ENCODE measurements at regions of chr13 and their contacts with region 1.

Region 1: DNA sequence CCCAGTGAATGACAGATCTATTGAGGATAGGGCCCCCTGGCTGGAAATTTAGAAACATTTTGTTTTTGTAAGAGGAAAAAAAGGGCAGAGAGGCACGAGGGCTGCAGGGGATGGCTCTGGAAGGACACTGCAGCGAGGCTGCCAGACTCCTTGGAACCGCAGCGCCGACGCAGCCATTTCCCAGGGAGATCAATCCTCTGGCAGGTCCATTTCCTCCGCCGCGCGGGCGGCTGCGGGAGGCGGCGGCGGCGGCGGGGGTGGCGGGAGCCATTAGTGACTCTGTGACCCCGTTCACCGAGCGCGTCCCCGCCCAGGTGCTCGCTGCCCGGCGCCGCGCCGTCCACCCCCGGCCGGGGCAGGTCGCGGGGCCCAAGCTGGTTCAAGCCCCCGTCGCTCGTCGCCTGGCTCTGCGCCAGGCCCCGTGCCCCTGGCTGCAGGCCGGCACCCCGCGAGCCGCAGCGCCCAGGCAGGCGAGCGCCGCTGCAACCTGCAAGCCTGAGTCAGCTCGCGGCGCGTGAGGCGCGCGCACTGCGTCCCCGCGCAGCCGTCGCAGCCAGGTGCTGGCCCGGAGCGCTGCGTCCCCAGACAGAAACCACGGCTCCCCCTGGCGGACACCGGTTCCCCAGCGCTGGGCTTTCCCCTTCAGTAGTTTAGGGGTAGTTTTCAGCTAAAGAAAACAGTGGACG is 192.6 kb downstream of the KATNAL1 start:
- DNase-seq: peak; percentile 85 to 97 (median 95)
- ATAC-seq: peak; percentile 88
- H3K4me3 ChIP-seq: peak overlapping the region; percentile 53
- H3K4me3 Mint-ChIP-seq: peak overlapping the region; percentile 91
- H3K27ac ChIP-seq: no peak overlapping the region
- H3K27ac Mint-ChIP-seq: peak overlapping the region; percentile 78
- H3K4me1 ChIP-seq: peaks cover 29% of the 10 kb centered on the region
- H3K4me1 Mint-ChIP-seq: peaks cover 44% of the 10 kb centered on the region
- H3K27me3 ChIP-seq: no peaks in the 10 kb centered on the region
- H3K27me3 Mint-ChIP-seq: no peaks in the 10 kb centered on the region
- CTCF ChIP-seq: peak; percentile 86

Region 2: DNA sequence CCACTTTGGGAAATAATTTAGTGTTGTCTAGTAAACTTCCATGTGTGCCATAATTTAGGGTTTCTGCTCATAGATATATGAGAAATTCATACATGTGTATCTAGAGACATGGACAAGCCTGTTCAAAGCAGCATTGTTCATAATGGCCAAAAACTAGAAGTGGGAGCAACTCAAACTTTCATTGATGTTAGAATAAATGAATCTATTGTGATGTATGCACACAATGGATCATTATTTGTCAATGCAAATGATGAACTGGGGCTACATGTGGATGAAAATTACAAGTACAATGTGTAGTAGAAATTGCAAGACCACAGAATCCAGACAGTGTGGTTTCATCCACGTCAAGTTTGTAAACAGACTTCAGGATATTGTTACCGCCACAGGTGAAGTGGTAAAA is 803.9 kb before region 1 on chr13:
- CTCF ChIA-PET with region 1: no interaction called
- POLR2A ChIA-PET with region 1: no interaction called
- intact Hi-C with region 1: no loop called
- DNase-seq: no peak
- ATAC-seq: no peak
- H3K4me3 ChIP-seq: no peak overlapping the region
- H3K4me3 Mint-ChIP-seq: no peak overlapping the region
- H3K27ac ChIP-seq: no peak overlapping the region
- H3K27ac Mint-ChIP-seq: no peak overlapping the region
- H3K4me1 ChIP-seq: no peaks in the 10 kb centered on the region
- H3K4me1 Mint-ChIP-seq: no peaks in the 10 kb centered on the region
- H3K27me3 ChIP-seq: no peaks in the 10 kb centered on the region
- H3K27me3 Mint-ChIP-seq: peaks cover 13% of the 10 kb centered on the region
- CTCF ChIP-seq: no peak

Region 3: GRCh38 chr13:29508130-29508875 is 606.4 kb before region 1 on chr13:
- CTCF ChIA-PET with region 1: interaction called, 35 read pairs
- POLR2A ChIA-PET with region 1: no interaction called
- intact Hi-C with region 1: loop called (anchors 1 kb)
- DNase-seq: peak; percentile 49 to 83 (median 68)
- ATAC-seq: peak; percentile 75
- H3K4me3 ChIP-seq: no peak overlapping the region
- H3K4me3 Mint-ChIP-seq: no peak overlapping the region
- H3K27ac ChIP-seq: no peak overlapping the region
- H3K27ac Mint-ChIP-seq: no peak overlapping the region
- H3K4me1 ChIP-seq: no peaks in the 10 kb centered on the region
- H3K4me1 Mint-ChIP-seq: no peaks in the 10 kb centered on the region
- H3K27me3 ChIP-seq: no peaks in the 10 kb centered on the region
- H3K27me3 Mint-ChIP-seq: peaks cover 11% of the 10 kb centered on the region
- CTCF ChIP-seq: peak; percentile 88

Region 4: DNA sequence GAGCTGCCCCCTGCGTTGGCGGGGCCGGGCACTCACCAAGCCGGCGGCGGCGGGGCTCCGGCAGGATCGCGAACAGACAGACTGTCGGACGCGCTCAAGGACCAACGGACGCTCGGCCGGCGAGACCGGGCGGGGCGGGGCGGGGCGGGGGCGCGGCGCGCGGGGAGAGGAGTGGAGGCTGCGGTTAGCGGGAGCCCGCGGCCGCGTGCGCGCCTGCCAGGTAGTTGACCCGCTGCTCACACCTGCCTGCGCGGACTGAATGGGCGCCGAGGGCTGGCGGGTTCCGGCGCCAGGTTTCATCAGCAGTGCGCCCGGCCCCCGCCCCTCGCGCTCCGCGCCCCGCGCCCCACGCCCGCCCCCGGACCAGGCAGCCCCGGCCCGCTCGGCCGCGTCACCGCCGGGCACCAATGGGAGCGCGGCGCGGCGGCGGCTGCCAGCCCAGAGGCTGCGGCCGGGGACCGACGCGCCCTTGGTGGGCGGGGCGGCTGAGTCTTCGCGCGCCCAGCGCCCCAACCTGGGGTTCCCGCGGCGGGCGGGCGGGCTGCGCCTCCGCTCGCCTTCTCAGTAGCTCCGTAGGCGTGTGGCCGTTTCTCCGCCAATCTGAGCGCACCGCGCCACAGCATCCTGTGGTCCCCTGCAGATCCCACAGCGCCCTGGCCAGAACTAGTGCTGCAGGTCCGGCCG is 519.2 kb before region 1 on chr13 and contains the start of gene SLC7A1:
- CTCF ChIA-PET with region 1: interaction called, 5 read pairs
- POLR2A ChIA-PET with region 1: no interaction called
- intact Hi-C with region 1: loop called in 1 of 2 experiments (anchors 5 kb)
- DNase-seq: peak; percentile 54 to 95 (median 74)
- ATAC-seq: peak; percentile 90
- H3K4me3 ChIP-seq: peak within 1 kb of the TSS; percentile 65
- H3K4me3 Mint-ChIP-seq: peak within 1 kb of the TSS; percentile 97
- H3K27ac ChIP-seq: peak within 1 kb of the TSS; percentile 31 to 52
- H3K27ac Mint-ChIP-seq: peak within 1 kb of the TSS; percentile 93
- H3K4me1 ChIP-seq: peaks cover 23% of the 10 kb centered on the region
- H3K4me1 Mint-ChIP-seq: peaks cover 45% of the 10 kb centered on the region
- H3K27me3 ChIP-seq: no peaks in the 10 kb centered on the region
- H3K27me3 Mint-ChIP-seq: no peaks in the 10 kb centered on the region
- CTCF ChIP-seq: no peak
- total RNA-seq, gene SLC7A1: 11.3 to 12.3 TPM

Region 5: GRCh38 chr13:29771247-29771646 is 343.5 kb before region 1 on chr13:
- CTCF ChIA-PET with region 1: interaction called, 100 read pairs
- POLR2A ChIA-PET with region 1: interaction called, 31 read pairs
- intact Hi-C with region 1: loop called (anchors 1 kb)
- DNase-seq: peak in 3 of 14 experiments; percentile 64 to 69 (median 67)
- ATAC-seq: peak; percentile 75
- H3K4me3 ChIP-seq: no peak overlapping the region
- H3K4me3 Mint-ChIP-seq: no peak overlapping the region
- H3K27ac ChIP-seq: no peak overlapping the region
- H3K27ac Mint-ChIP-seq: no peak overlapping the region
- H3K4me1 ChIP-seq: no peaks in the 10 kb centered on the region
- H3K4me1 Mint-ChIP-seq: peaks cover 8% of the 10 kb centered on the region
- H3K27me3 ChIP-seq: no peaks in the 10 kb centered on the region
- H3K27me3 Mint-ChIP-seq: no peaks in the 10 kb centered on the region
- CTCF ChIP-seq: peak; percentile 78

Region 6: GRCh38 chr13:29923554-29924481 is 190.9 kb before region 1 on chr13:
- CTCF ChIA-PET with region 1: interaction called, 10 read pairs
- POLR2A ChIA-PET with region 1: no interaction called
- intact Hi-C with region 1: no loop called
- DNase-seq: peak in 13 of 14 experiments; percentile 19 to 78 (median 42)
- ATAC-seq: peak; percentile 75
- H3K4me3 ChIP-seq: no peak overlapping the region
- H3K4me3 Mint-ChIP-seq: no peak overlapping the region
- H3K27ac ChIP-seq: no peak overlapping the region
- H3K27ac Mint-ChIP-seq: no peak overlapping the region
- H3K4me1 ChIP-seq: peaks cover 22% of the 10 kb centered on the region
- H3K4me1 Mint-ChIP-seq: peaks cover 52% of the 10 kb centered on the region
- H3K27me3 ChIP-seq: no peaks in the 10 kb centered on the region
- H3K27me3 Mint-ChIP-seq: no peaks in the 10 kb centered on the region
- CTCF ChIP-seq: peak; percentile 70

Region 7: DNA sequence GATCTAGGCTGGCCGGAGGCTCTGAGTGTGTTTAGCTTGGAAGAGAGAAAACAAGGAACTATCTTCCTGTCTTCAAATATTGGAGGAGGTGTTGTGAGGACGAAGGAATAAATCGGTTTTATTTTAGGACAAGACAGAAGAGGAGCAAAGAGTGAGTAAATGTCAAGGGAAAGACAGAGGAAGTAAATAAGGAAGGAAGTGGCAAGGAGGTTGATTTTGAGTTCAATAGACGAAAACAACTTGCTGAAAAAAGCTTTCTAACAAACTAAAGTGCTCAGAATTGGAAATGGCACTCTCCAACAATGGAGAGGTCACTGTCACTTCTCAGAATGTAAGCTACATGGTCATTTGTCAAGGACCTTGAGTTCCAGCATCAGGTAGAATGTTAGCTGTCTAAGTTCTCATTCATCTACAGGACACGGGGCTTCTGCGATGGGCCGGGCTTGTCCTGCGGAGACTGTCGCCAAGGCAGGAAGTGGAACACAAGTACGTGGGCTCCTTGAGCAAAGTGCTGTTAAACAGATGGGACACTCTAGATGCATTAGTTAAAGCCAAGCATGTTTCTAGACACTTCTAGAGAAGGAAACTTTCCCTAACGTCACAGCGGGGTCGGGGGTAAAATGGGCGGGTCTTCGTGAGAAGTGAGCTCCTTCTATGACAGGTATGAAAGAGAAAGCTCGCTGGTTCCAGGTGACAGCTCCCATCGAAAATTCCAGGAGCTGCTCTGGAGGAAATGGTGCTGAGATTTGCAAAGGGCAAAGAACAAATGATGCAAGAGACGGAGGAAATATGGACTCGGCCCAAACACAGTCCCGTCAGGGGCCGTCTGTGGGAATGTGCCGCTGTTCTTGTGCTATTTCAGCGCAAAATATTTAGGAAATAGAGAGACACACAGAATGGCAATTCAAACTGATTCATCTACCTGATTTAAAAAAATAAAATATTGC is 160.4 kb before region 1 on chr13:
- CTCF ChIA-PET with region 1: interaction called, 7 read pairs
- POLR2A ChIA-PET with region 1: interaction called, 6 read pairs
- intact Hi-C with region 1: loop called in 1 of 2 experiments (anchors 5 kb)
- DNase-seq: peak in 13 of 14 experiments; percentile 16 to 72 (median 44)
- ATAC-seq: peak; percentile 76
- H3K4me3 ChIP-seq: peak overlapping the region; percentile 51
- H3K4me3 Mint-ChIP-seq: peak overlapping the region; percentile 90
- H3K27ac ChIP-seq: peak overlapping the region in 1 of 2 donors; percentile 61
- H3K27ac Mint-ChIP-seq: peak overlapping the region; percentile 88
- H3K4me1 ChIP-seq: peaks cover 34% of the 10 kb centered on the region
- H3K4me1 Mint-ChIP-seq: peaks cover 65% of the 10 kb centered on the region
- H3K27me3 ChIP-seq: no peaks in the 10 kb centered on the region
- H3K27me3 Mint-ChIP-seq: no peaks in the 10 kb centered on the region
- CTCF ChIP-seq: no peak

Region 8: GRCh38 chr13:30319655-30320054 is 204.9 kb after region 1 on chr13:
- CTCF ChIA-PET with region 1: no interaction called
- POLR2A ChIA-PET with region 1: no interaction called
- intact Hi-C with region 1: no loop called
- DNase-seq: no peak
- ATAC-seq: no peak
- H3K4me3 ChIP-seq: no peak overlapping the region
- H3K4me3 Mint-ChIP-seq: no peak overlapping the region
- H3K27ac ChIP-seq: no peak overlapping the region
- H3K27ac Mint-ChIP-seq: no peak overlapping the region
- H3K4me1 ChIP-seq: no peaks in the 10 kb centered on the region
- H3K4me1 Mint-ChIP-seq: peaks cover 7% of the 10 kb centered on the region
- H3K27me3 ChIP-seq: no peaks in the 10 kb centered on the region
- H3K27me3 Mint-ChIP-seq: no peaks in the 10 kb centered on the region
- CTCF ChIP-seq: no peak

Region 9: GRCh38 chr13:30486230-30487074 is 371.7 kb after region 1 on chr13:
- CTCF ChIA-PET with region 1: no interaction called
- POLR2A ChIA-PET with region 1: no interaction called
- intact Hi-C with region 1: no loop called
- DNase-seq: no peak
- ATAC-seq: no peak
- H3K4me3 ChIP-seq: no peak overlapping the region
- H3K4me3 Mint-ChIP-seq: no peak overlapping the region
- H3K27ac ChIP-seq: no peak overlapping the region
- H3K27ac Mint-ChIP-seq: no peak overlapping the region
- H3K4me1 ChIP-seq: no peaks in the 10 kb centered on the region
- H3K4me1 Mint-ChIP-seq: no peaks in the 10 kb centered on the region
- H3K27me3 ChIP-seq: no peaks in the 10 kb centered on the region
- H3K27me3 Mint-ChIP-seq: no peaks in the 10 kb centered on the region
- CTCF ChIP-seq: no peak

Measured in CD4-positive, alpha-beta T cell (primary cell).